ENCODE measurements at regions of chr11 and their contacts with region 1.

Region 1: DNA sequence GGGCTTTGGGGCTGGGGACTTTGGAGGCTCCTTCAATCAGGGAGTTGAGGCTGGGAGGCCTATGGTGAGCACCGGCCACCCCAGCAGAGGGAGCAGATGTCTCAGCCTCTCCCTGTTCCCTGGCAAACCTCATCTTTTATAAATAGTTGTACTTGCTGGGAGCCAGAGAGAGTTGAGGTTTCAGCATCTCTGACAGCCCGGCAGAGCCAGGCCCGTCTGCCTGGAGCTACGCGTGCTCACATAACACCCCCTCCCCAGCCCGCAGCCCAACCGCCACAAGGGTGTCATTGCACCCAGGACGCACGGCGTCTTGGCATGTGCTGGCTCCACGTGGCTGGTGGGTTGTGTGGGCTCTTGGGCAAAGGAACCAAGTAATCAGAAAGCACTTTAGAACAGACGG is 127.1 kb downstream of the CHST1 start:
- DNase-seq: peak; percentile 40 to 91 (median 78)
- H3K4me3 ChIP-seq: no peak overlapping the region
- H3K27ac ChIP-seq: peak overlapping the region in 56 of 59 donors; percentile 38 to 94 (median 81)
- H3K27me3 ChIP-seq: peaks cover 0 to 7% (median 0%) of the 10 kb centered on the region in 45 donors
- CTCF ChIP-seq: peak in 23 of 56 donors; percentile 10 to 46 (median 28)

Region 2: DNA sequence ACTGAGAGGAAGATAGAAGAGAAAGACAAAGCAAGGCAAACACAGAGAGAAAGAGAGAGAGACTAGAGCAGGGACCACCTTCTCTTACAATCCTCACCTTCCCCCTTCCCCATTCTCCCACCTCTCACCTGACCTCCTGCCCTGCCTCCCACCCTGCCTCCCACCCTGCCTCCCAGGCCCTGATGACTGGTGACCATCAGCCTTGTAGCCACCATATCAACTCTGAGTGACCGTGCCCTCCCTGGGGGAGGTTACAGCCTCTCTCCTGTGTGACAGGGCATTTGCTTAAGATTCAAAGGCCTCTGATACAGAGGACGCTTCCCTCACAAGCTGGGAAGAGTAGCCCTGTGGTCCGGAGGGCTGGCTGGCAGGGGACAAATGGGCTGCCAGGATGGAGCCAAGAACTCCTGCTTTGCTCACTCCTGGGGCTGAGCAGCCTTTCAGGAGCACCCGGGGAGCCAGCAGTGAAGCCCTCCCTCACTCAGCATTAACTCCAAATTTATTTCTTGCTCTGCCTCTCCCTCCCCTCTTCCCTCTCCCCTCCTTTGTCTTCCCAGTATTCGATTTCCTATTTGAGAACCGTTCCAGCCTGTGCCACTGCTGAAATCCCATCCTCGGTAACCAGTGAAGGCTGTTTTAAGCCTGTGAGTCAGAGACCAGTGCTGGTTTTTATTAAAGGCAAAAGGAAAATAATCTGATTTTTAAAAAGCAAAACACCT is 127.0 kb before region 1 on chr11:
- intact Hi-C with region 1: loop called in 1 of 2 experiments (anchors 10 kb)
- DNase-seq: peak in 1 of 10 donors; percentile 43
- H3K4me3 ChIP-seq: peak overlapping the region in 17 of 59 donors; percentile 3 to 37 (median 15)
- H3K27ac ChIP-seq: peak overlapping the region in 53 of 59 donors; percentile 14 to 91 (median 68)
- H3K27me3 ChIP-seq: peaks cover 0 to 8% (median 0%) of the 10 kb centered on the region in 45 donors
- CTCF ChIP-seq: no peak

Region 3: DNA sequence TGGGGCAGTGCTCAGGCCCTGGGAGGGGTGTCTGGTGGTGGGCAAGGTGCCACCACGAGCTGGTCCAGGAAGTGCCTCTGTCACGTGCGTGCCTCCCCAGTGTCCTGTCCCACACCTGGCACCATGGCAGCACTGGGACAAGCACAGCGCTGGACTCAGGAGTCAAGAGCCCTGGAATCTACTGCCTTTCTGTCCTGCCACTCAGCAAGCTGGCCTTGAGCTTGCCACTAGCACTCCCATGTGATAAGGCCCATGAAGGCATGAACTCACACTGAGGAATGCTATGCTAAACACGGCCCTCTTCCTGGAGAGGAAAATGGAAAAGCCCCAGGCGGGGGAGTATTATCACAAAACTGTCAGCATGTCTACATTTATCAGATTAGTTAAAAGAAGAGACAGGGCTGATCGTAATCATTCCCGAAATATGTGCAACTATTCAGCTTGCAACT is 215.9 kb after region 1 on chr11:
- intact Hi-C with region 1: loop called in 1 of 2 experiments (anchors 5 kb)
- DNase-seq: no peak
- H3K4me3 ChIP-seq: no peak overlapping the region
- H3K27ac ChIP-seq: no peak overlapping the region
- H3K27me3 ChIP-seq: peaks cover 0 to 17% (median 0%) of the 10 kb centered on the region in 45 donors
- CTCF ChIP-seq: no peak